HAP-1 (cell line): ENCODE measurements at regions of chr6 and their contacts with region 1.

Region 1: GRCh38 chr6:18496462-18496861 is 109.3 kb downstream of the RNF144B start:
- DNase-seq: no peak
- H3K4me3 ChIP-seq: no peak overlapping the region
- H3K4me1 ChIP-seq: no peaks in the 10 kb centered on the region; the same call in 1 of the 2 replicates
- H3K27me3 ChIP-seq: no peaks in the 10 kb centered on the region

Region 2: GRCh38 chr6:18327626-18328025 is 168.8 kb before region 1 on chr6:
- in situ Hi-C with region 1: loop called (anchors 5 kb)
- DNase-seq: no peak
- H3K4me3 ChIP-seq: no peak overlapping the region
- H3K4me1 ChIP-seq: no peaks in the 10 kb centered on the region
- H3K27me3 ChIP-seq: no peaks in the 10 kb centered on the region